HEK293 (cell line): ENCODE measurements at regions of chr14 and their contacts with region 1.

Region 1: GRCh38 chr14:77457522-77458290 is at the starts of genes AHSA1 and VIPAS39:
- H3K4me3 ChIP-seq: peak within 1 kb of the TSS; percentile 90
- H3K27ac ChIP-seq: peak within 1 kb of the TSS; percentile 90
- H3K4me1 ChIP-seq: peaks cover 4% of the 10 kb centered on the region
- CTCF ChIP-seq: no peak

Region 2: GRCh38 chr14:77436042-77436441 is 21.7 kb before region 1 on chr14:
- CTCF ChIA-PET with region 1: no interaction called
- POLR2A ChIA-PET with region 1: no interaction called
- H3K4me3 ChIP-seq: no peak overlapping the region
- H3K27ac ChIP-seq: no peak overlapping the region
- H3K4me1 ChIP-seq: no peaks in the 10 kb centered on the region
- CTCF ChIP-seq: no peak

Region 3: DNA sequence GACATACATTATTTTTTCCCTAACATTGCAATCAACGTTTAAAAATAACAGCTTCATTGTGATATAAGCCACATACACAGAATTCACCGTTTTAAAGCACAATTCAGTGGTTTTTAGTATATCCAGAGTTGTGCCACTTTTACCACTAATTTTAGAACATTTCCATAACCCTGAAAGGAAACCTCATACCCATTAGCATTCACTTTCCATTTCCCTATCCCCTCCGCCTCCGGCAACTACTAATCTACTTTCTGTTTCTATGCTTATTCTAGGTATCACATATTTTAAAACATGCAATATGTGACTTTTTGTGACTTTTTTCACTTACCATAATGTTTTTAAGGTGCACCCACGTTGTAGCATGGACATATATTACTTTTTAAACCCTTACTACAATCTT is 96.5 kb after region 1 on chr14:
- CTCF ChIA-PET with region 1: interaction called, 12 read pairs
- POLR2A ChIA-PET with region 1: no interaction called
- H3K4me3 ChIP-seq: no peak overlapping the region
- H3K27ac ChIP-seq: no peak overlapping the region
- H3K4me1 ChIP-seq: no peaks in the 10 kb centered on the region
- CTCF ChIP-seq: no peak